Left cardiac atrium (tissue), 4 donors: ENCODE measurements at regions of chr1 and their contacts with region 1.

Region 1: GRCh38 chr1:172398970-172399755 is 21.3 kb upstream of the C1orf105 start:
- DNase-seq: peak; percentile 48
- ATAC-seq: peak; percentile 87 to 92

Region 2: GRCh38 chr1:172041742-172042141 is 357.4 kb before region 1 on chr1:
- intact Hi-C with region 1: loop called in 1 of 2 experiments (anchors 5 kb)
- DNase-seq: no peak
- ATAC-seq: peak in 1 of 2 donors; percentile 44

Region 3: DNA sequence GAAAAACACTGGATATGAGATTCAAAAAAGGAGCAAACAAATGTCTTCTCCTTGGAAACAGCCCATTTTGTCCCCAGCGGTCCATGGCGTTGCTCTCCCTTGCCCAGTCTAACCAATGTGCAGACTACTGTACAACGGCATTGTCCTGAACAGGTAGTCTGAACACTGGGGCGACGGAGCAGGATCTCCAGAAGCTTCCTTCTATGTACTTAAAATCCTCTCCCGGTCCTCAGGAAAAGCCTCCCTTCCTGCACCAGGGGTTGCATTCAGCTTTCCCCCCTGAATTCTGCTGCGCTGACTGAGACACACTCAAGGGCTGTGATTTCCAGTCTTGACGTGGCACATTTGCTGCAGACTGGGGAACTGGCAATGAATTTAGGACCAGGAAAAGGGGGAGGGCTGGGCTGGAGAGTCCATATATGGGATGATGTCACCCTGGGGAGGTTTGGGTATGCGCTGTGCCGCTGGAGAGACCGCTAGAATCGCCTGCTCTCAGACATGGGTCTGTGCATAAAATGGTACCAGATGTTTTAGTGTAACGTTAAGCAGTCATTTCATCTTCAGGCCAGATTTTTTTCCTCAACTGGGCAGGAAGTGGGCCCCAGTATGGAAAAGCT is 254.6 kb before region 1 on chr1:
- intact Hi-C with region 1: loop called in 1 of 2 experiments (anchors 10 kb)
- DNase-seq: peak; percentile 76
- ATAC-seq: peak; percentile 96 to 97

Region 4: GRCh38 chr1:172357753-172358385 is 41.3 kb before region 1 on chr1:
- intact Hi-C with region 1: loop called in 1 of 2 experiments (anchors 5 kb)
- DNase-seq: no peak
- ATAC-seq: peak in 1 of 2 donors; percentile 4